Heart left ventricle (tissue), 16 donors: ENCODE measurements at regions of chr3 and their contacts with region 1.

Region 1: GRCh38 chr3:160941885-160942494 is 163.2 kb downstream of the B3GALNT1 start:
- DNase-seq: peak in 3 of 5 donors; percentile 60 to 67 (median 61)
- ATAC-seq: peak; percentile 55 to 84 (median 75)
- H3K4me3 ChIP-seq: no peak overlapping the region
- H3K27ac ChIP-seq: no peak overlapping the region
- H3K4me1 ChIP-seq: peaks cover 0 to 8% (median 0%) of the 10 kb centered on the region in 12 donors
- H3K27me3 ChIP-seq: no peaks in the 10 kb centered on the region
- CTCF ChIP-seq: peak; percentile 80 to 97 (median 88)
- POLR2A ChIP-seq: no peak

Region 2: DNA sequence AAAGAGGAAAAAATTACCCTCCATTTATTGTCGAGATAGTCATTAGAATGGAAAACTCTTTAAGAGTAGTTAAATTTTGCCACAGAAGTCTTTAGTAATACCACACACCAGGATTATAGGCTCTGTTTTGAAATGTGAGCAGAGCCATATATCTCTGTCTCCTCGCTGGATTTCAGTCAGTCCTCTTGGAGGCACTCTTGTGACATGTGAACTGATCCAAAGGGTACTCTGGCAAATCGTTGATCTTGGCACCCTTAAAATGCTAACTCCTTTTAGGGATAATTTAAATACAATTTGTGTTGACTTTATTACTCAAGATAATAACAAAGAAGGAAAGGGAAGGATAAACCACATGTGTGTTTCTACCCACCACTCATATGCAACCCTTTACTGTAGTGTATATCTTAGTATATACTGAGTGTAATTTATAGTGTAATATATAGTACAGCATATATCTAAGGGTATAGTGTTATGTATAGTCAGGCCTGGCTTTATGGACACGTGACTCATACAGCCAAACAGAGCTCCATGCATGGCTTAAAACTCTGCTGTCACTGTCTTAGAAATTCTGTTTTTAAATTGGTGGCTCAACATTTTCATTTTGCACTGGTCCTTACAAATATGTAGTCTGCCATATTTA is 364.3 kb before region 1 on chr3:
- intact Hi-C with region 1: loop called in 4 of 10 experiments (anchors 5 to 10 kb)
- DNase-seq: no peak
- ATAC-seq: peak; percentile 79 to 88 (median 86)
- H3K4me3 ChIP-seq: no peak overlapping the region
- H3K27ac ChIP-seq: peak overlapping the region in 5 of 12 donors; percentile 4 to 59 (median 20)
- H3K4me1 ChIP-seq: peaks cover 0 to 12% (median 0%) of the 10 kb centered on the region in 12 donors
- H3K27me3 ChIP-seq: no peaks in the 10 kb centered on the region
- CTCF ChIP-seq: peak in 9 of 12 donors; percentile 13 to 46 (median 32)
- POLR2A ChIP-seq: no peak

Region 3: GRCh38 chr3:160587105-160587504 is 354.9 kb before region 1 on chr3:
- intact Hi-C with region 1: loop called in 2 of 10 experiments (anchors 10 kb)
- DNase-seq: peak in 1 of 5 donors; percentile 43
- ATAC-seq: peak in 3 of 4 donors; percentile 44 to 78 (median 55)
- H3K4me3 ChIP-seq: no peak overlapping the region
- H3K27ac ChIP-seq: no peak overlapping the region
- H3K4me1 ChIP-seq: no peaks in the 10 kb centered on the region
- H3K27me3 ChIP-seq: no peaks in the 10 kb centered on the region
- CTCF ChIP-seq: no peak
- POLR2A ChIP-seq: no peak

Region 4: DNA sequence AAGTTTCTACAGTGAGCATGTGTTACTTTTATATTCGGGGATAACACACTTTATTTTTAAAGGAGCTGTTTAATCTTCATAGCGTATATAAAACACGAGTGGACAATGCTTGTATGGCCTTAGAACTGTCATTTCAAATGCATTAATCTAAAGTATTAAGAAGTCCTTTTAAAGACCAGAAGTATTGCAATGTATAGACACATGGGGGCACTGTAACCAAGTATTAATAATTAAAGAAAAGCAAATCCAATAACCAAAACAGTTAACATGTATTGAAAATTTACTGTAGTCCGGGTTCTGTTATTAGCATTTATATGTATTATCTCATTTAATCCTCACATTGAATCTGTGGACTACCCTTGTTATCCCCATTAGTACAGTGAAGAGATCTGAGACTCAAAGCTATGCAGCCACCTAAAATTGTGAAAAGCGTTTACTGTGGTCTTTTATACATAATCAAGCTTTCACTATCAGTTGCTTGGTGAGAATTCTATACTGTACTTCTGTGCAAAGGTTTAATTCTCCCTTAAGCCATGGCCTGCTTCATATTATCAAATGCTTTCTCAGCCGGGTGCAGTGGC is 254.9 kb before region 1 on chr3:
- intact Hi-C with region 1: loop called in 3 of 10 experiments (anchors 5 kb)
- DNase-seq: no peak
- ATAC-seq: no peak
- H3K4me3 ChIP-seq: no peak overlapping the region
- H3K27ac ChIP-seq: no peak overlapping the region
- H3K4me1 ChIP-seq: no peaks in the 10 kb centered on the region
- H3K27me3 ChIP-seq: no peaks in the 10 kb centered on the region
- CTCF ChIP-seq: peak in 11 of 12 donors; percentile 10 to 49 (median 33)
- POLR2A ChIP-seq: no peak

Region 5: GRCh38 chr3:160707187-160707794 is 234.7 kb before region 1 on chr3:
- intact Hi-C with region 1: loop called (anchors 1 to 5 kb)
- DNase-seq: peak in 2 of 5 donors; percentile 31 to 43
- ATAC-seq: peak; percentile 58 to 85 (median 72)
- H3K4me3 ChIP-seq: no peak overlapping the region
- H3K27ac ChIP-seq: no peak overlapping the region
- H3K4me1 ChIP-seq: peaks cover 0 to 3% (median 0%) of the 10 kb centered on the region in 12 donors
- H3K27me3 ChIP-seq: no peaks in the 10 kb centered on the region
- CTCF ChIP-seq: peak; percentile 43 to 78 (median 61)
- POLR2A ChIP-seq: no peak

Region 6: GRCh38 chr3:160830792-160831191 is 111.2 kb before region 1 on chr3:
- intact Hi-C with region 1: no loop called
- DNase-seq: no peak
- ATAC-seq: no peak
- H3K4me3 ChIP-seq: no peak overlapping the region
- H3K27ac ChIP-seq: no peak overlapping the region
- H3K4me1 ChIP-seq: peaks cover 0 to 41% (median 11%) of the 10 kb centered on the region in 12 donors
- H3K27me3 ChIP-seq: no peaks in the 10 kb centered on the region
- CTCF ChIP-seq: no peak
- POLR2A ChIP-seq: no peak

Region 7: DNA sequence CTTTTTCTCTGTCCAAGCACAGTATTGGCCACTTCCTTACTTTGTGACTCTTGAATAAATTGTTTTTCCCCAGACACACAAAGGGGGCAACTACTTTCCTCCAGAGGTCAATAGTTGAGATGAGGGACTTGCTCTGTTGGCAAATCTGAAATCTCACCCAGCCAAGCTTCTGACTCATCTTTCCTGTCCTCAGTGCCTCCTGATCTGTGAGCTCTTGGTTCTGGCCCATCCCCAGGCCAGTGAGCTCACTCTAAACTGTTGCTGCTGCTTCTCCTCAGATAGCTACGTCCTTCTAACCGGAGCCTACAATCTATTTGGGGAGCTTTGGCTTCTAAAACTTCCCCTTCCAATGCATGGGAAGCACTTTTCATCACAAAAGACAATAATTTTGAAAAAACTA is 229.1 kb after region 1 on chr3:
- intact Hi-C with region 1: no loop called
- DNase-seq: peak in 4 of 5 donors; percentile 43 to 87 (median 68)
- ATAC-seq: peak; percentile 94 to 99 (median 98)
- H3K4me3 ChIP-seq: no peak overlapping the region
- H3K27ac ChIP-seq: peak overlapping the region in 7 of 12 donors; percentile 17 to 69 (median 48)
- H3K4me1 ChIP-seq: peaks cover 0 to 18% (median 10%) of the 10 kb centered on the region in 12 donors
- H3K27me3 ChIP-seq: no peaks in the 10 kb centered on the region
- CTCF ChIP-seq: no peak
- POLR2A ChIP-seq: no peak

Region 8: DNA sequence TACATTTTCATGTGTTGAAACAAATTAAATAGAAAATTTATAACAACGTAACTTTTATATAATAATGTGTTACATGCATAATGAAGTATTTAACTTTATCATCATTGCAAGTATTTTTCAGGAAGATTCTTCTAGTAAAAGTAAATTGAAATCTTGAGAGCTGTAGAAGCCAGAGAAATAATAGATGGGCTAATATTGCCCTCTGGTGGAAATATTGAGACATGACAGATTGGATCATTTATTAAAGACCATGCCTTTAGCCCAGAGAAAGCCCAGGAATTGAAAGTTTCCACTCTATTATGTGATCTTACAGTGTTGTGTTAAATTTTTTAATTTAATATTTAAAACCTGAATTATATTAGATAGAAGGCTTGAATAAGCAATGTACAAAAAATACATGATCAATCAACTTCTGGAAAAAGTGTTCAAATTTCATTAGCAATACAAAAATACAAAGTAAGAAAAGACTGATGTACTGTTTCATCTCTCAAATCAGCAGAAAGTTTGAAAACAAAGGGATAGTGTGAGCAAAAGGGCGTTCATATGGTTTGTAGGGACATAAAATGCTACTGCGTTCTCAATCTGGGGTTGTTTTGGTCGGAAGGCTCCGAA is 482.0 kb after region 1 on chr3:
- intact Hi-C with region 1: loop called in 2 of 10 experiments (anchors 10 kb)
- DNase-seq: no peak
- ATAC-seq: peak in 2 of 4 donors; percentile 44 to 63
- H3K4me3 ChIP-seq: no peak overlapping the region
- H3K27ac ChIP-seq: no peak overlapping the region
- H3K4me1 ChIP-seq: peaks cover 0 to 7% (median 0%) of the 10 kb centered on the region in 12 donors
- H3K27me3 ChIP-seq: no peaks in the 10 kb centered on the region
- CTCF ChIP-seq: peak; percentile 68 to 90 (median 74)
- POLR2A ChIP-seq: no peak